Caco-2 (cell line): ENCODE measurements at regions of chr18 and their contacts with region 1.

Region 1: DNA sequence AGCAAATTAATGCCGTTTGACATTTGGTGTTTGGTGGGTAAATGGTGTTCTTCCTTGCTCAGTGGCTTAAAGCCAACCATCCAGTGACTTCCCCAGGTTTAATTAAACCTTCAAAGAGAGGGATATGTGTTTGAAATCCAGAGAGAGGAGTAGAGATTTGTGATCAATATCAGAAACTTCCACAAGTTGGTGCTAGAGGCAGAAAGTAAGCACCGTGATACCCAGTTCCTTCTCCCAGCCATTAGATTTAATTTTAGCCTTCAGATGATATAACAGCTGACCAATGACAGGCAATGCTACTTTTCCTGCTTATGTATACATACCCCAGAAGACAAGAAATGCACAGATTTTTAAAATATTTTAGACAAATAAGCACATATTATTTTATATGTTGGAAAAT is 398.5 kb downstream of the CDH2 start:
- DNase-seq: no peak
- H3K4me3 ChIP-seq: no peak overlapping the region
- H3K4me3 Mint-ChIP-seq: no peak overlapping the region
- H3K27ac Mint-ChIP-seq: no peak overlapping the region
- H3K4me1 ChIP-seq: no peaks in the 10 kb centered on the region
- H3K4me1 Mint-ChIP-seq: no peaks in the 10 kb centered on the region
- H3K27me3 ChIP-seq: no peaks in the 10 kb centered on the region
- H3K27me3 Mint-ChIP-seq: no peaks in the 10 kb centered on the region
- CTCF ChIP-seq: peak in 1 of 2 experiments; percentile 35

Region 2: GRCh38 chr18:28013066-28013465 is 234.6 kb after region 1 on chr18:
- CTCF ChIA-PET with region 1: no interaction called
- POLR2A ChIA-PET with region 1: no interaction called
- intact Hi-C with region 1: loop called (anchors 2 kb)
- DNase-seq: no peak
- H3K4me3 ChIP-seq: no peak overlapping the region
- H3K4me3 Mint-ChIP-seq: no peak overlapping the region
- H3K27ac Mint-ChIP-seq: no peak overlapping the region
- H3K4me1 ChIP-seq: no peaks in the 10 kb centered on the region
- H3K4me1 Mint-ChIP-seq: no peaks in the 10 kb centered on the region
- H3K27me3 ChIP-seq: no peaks in the 10 kb centered on the region
- H3K27me3 Mint-ChIP-seq: no peaks in the 10 kb centered on the region
- CTCF ChIP-seq: no peak

Region 3: DNA sequence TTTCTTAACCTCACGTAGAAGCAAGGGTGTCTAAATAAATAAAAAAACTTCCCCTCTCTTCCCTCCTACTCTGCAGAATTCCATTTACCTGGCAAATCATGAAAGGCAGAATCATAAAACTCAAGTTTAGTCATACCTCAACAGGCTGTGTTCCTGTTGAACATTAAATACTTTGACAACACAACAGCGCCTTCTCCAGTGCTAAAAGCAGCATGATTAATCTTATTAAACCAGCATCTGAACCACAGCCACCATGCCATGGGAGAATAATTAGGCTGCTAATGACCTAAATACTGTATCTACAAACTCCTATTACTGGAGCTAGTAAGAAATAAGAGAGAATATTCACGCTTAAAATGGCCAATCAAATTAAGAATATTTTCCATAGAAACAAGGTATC is 330.4 kb after region 1 on chr18:
- CTCF ChIA-PET with region 1: no interaction called
- POLR2A ChIA-PET with region 1: no interaction called
- intact Hi-C with region 1: loop called (anchors 10 kb)
- DNase-seq: no peak
- H3K4me3 ChIP-seq: no peak overlapping the region
- H3K4me3 Mint-ChIP-seq: no peak overlapping the region
- H3K27ac Mint-ChIP-seq: no peak overlapping the region
- H3K4me1 ChIP-seq: peaks cover 16% of the 10 kb centered on the region; the same call in 1 of the 2 replicates
- H3K4me1 Mint-ChIP-seq: peaks cover 15% of the 10 kb centered on the region
- H3K27me3 ChIP-seq: no peaks in the 10 kb centered on the region
- H3K27me3 Mint-ChIP-seq: no peaks in the 10 kb centered on the region
- CTCF ChIP-seq: no peak